Calu3 (cell line): ENCODE measurements at regions of chr20 and their contacts with region 1.

Region 1: DNA sequence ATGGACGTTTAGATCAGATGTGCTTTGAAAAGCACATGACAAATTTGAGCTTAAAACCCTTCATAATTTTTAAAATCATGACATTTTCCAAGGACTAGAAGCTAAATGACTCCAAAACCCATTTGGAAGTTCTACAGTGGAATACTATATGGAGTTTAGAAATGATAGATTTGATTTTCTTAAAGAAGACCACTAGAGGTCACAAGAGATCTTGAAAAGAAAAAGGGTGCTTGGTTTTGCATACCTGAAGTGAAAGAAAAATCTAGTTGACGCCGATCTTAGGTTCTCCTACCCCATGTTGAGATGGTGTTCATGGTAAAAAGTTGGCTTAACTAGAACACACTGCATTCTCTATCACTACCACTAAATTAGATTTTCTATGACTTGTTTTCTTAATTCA is 31.5 kb downstream of the CFAP61 start:
- DNase-seq: no peak
- H3K4me3 Mint-ChIP-seq: no peak overlapping the region
- H3K27ac Mint-ChIP-seq: no peak overlapping the region
- H3K4me1 Mint-ChIP-seq: peaks cover 7% of the 10 kb centered on the region
- H3K27me3 Mint-ChIP-seq: no peaks in the 10 kb centered on the region
- CTCF ChIP-seq: no peak

Region 2: GRCh38 chr20:20237093-20237959 is 153.5 kb after region 1 on chr20:
- CTCF ChIA-PET with region 1: no interaction called
- intact Hi-C with region 1: loop called (anchors 1 kb)
- DNase-seq: peak; percentile 13
- H3K4me3 Mint-ChIP-seq: no peak overlapping the region
- H3K27ac Mint-ChIP-seq: no peak overlapping the region
- H3K4me1 Mint-ChIP-seq: no peaks in the 10 kb centered on the region
- H3K27me3 Mint-ChIP-seq: peaks cover 24% of the 10 kb centered on the region
- CTCF ChIP-seq: no peak

Region 3: GRCh38 chr20:20360464-20360863 is 276.7 kb after region 1 on chr20:
- CTCF ChIA-PET with region 1: no interaction called
- intact Hi-C with region 1: loop called (anchors 10 kb)
- DNase-seq: no peak
- H3K4me3 Mint-ChIP-seq: no peak overlapping the region
- H3K27ac Mint-ChIP-seq: no peak overlapping the region
- H3K4me1 Mint-ChIP-seq: no peaks in the 10 kb centered on the region
- H3K27me3 Mint-ChIP-seq: peaks cover 21% of the 10 kb centered on the region
- CTCF ChIP-seq: no peak